ENCODE measurements at regions of chr4 and their contacts with region 1.

Region 1: DNA sequence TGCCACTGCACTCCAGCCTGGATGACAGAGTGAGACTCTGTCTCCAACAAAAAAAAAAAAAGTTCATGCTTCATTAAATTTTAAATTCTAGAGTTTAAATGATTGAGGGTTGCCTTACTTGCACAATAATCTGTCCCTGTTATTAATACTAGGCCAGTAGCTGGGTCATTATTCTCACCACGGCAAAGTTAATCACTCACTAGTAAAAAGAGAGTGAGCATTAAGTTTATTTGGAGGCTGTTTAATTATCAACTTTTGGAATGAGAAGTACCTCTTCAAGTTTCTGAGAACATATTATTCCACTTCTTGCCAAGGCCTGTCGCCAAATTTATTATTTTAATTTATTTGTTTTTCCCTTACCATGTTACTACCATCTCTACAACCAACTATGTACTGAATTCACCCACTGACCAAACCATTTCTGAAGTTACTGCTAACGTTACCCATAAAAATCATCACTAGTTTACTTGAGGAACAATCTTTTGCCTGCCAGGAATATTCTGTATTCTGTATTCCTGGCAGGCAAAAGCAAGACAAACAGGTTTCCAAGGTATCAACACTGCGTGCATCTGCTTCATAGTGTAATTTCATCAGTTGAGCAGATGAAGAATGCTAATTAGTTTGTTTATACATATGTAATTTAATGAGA is 26.5 kb downstream of the GUCY1A1 start:
- DNase-seq: no peak
- H3K4me3 ChIP-seq: no peak overlapping the region
- H3K27ac ChIP-seq: peak overlapping the region; percentile 23 to 58 (median 38)
- H3K4me1 ChIP-seq: peaks cover 0 to 26% (median 0%) of the 10 kb centered on the region in 4 donors
- H3K27me3 ChIP-seq: no peaks in the 10 kb centered on the region
- CTCF ChIP-seq: no peak
- EP300 ChIP-seq: no peak
- POLR2A ChIP-seq: no peak

Region 2: DNA sequence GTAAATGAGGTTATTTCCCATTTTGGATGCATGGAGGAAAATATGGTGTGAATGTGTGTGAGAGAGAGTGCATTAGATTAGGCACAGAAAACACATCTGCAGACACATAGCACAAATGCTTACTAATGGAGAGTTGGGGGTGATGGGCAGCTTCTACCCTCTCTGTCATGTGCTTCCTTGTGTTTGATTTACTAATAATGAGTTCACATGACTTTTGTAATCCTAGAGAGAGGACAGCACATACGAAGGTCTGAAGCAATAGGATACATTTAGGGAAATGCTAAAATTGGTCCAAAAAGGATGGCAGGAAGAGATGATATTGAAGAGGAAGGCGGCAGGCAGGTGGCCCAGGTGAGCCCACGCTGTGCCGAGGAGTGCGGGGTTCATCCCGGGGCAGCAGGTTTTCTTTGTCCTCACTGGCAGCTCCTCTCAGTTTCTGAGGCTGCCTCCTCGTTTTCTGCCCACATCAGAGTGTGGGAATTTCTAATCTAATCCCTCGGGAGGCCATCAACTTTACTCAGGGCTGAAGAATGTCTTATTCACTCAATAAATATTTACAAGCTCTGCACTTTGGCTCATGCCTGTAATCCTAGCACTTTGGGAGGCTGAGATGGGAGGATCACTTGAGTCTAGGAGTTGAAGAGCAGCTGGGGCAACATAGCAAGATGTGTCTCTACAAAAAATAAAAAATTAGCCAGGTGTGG is 300.5 kb before region 1 on chr4:
- in situ Hi-C with region 1: no loop called
- intact Hi-C with region 1: no loop called
- DNase-seq: no peak
- H3K4me3 ChIP-seq: no peak overlapping the region
- H3K27ac ChIP-seq: no peak overlapping the region
- H3K4me1 ChIP-seq: peaks cover 0 to 4% (median 0%) of the 10 kb centered on the region in 4 donors
- H3K27me3 ChIP-seq: no peaks in the 10 kb centered on the region
- CTCF ChIP-seq: no peak
- EP300 ChIP-seq: no peak
- POLR2A ChIP-seq: no peak

Region 3: GRCh38 chr4:155777971-155778735 is 85.0 kb after region 1 on chr4:
- in situ Hi-C with region 1: no loop called
- intact Hi-C with region 1: loop called (anchors 10 kb)
- DNase-seq: no peak
- H3K4me3 ChIP-seq: no peak overlapping the region
- H3K27ac ChIP-seq: peak overlapping the region; percentile 58 to 76 (median 66)
- H3K4me1 ChIP-seq: peaks cover 0 to 15% (median 5%) of the 10 kb centered on the region in 4 donors
- H3K27me3 ChIP-seq: no peaks in the 10 kb centered on the region
- CTCF ChIP-seq: no peak
- EP300 ChIP-seq: no peak
- POLR2A ChIP-seq: no peak